B cell (primary cell): ENCODE measurements at regions of chr16 and their contacts with region 1.

Region 1: GRCh38 chr16:56425439-56425832 is at the start of gene AMFR:
- DNase-seq: peak; percentile 90
- ATAC-seq: peak; percentile 88
- H3K4me3 ChIP-seq: peak within 1 kb of the TSS; percentile 69 to 78 (median 70)
- H3K4me3 Mint-ChIP-seq: peak within 1 kb of the TSS; percentile 98
- H3K27ac ChIP-seq: peak within 1 kb of the TSS; percentile 72 to 81
- H3K27ac Mint-ChIP-seq: peak within 1 kb of the TSS; percentile 97
- H3K4me1 ChIP-seq: peaks cover 32 to 36% of the 10 kb centered on the region in 2 donors
- H3K4me1 Mint-ChIP-seq: peaks cover 34% of the 10 kb centered on the region
- H3K27me3 ChIP-seq: no peaks in the 10 kb centered on the region
- H3K27me3 Mint-ChIP-seq: no peaks in the 10 kb centered on the region
- CTCF ChIP-seq: peak; percentile 62
- total RNA-seq, gene AMFR: 225 and 234 TPM in 2 replicates

Region 2: DNA sequence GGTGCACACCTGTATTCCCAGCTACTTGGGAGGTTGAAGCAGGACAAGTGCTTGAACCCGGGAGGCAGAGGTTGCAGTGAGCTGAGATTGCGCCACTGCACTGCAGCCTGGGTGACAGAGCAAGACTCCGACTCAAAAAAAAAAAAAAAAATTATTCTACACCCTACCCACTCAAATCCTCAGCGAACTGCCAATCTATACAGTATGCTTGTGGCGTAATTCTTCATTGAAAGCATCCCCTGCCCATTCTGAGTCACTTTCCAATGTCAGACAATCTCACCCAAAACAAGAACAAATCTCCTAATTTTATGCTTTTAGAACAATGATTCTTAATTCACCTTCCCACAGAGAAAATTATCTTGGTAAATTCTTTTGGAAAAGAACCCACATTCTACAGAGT is 12.1 kb before region 1 on chr16:
- CTCF ChIA-PET with region 1: interaction called, 6 read pairs
- POLR2A ChIA-PET with region 1: no interaction called
- intact Hi-C with region 1: loop called (anchors 1 kb)
- DNase-seq: no peak
- ATAC-seq: no peak
- H3K4me3 ChIP-seq: no peak overlapping the region
- H3K4me3 Mint-ChIP-seq: no peak overlapping the region
- H3K27ac ChIP-seq: no peak overlapping the region
- H3K27ac Mint-ChIP-seq: no peak overlapping the region
- H3K4me1 ChIP-seq: peaks cover 13 to 26% of the 10 kb centered on the region in 2 donors
- H3K4me1 Mint-ChIP-seq: peaks cover 32% of the 10 kb centered on the region
- H3K27me3 ChIP-seq: no peaks in the 10 kb centered on the region
- H3K27me3 Mint-ChIP-seq: no peaks in the 10 kb centered on the region
- CTCF ChIP-seq: no peak

Region 3: GRCh38 chr16:56708525-56709442 is 283.3 kb after region 1 on chr16:
- CTCF ChIA-PET with region 1: no interaction called
- POLR2A ChIA-PET with region 1: no interaction called
- intact Hi-C with region 1: loop called (anchors 10 kb)
- DNase-seq: no peak
- ATAC-seq: no peak
- H3K4me3 ChIP-seq: no peak overlapping the region
- H3K4me3 Mint-ChIP-seq: no peak overlapping the region
- H3K27ac ChIP-seq: no peak overlapping the region
- H3K27ac Mint-ChIP-seq: no peak overlapping the region
- H3K4me1 ChIP-seq: no peaks in the 10 kb centered on the region
- H3K4me1 Mint-ChIP-seq: no peaks in the 10 kb centered on the region
- H3K27me3 ChIP-seq: peaks cover 0 to 8% (median 0%) of the 10 kb centered on the region in 4 experiments
- H3K27me3 Mint-ChIP-seq: peaks cover 3% of the 10 kb centered on the region
- CTCF ChIP-seq: no peak